Aorta (tissue), 5 donors: ENCODE measurements at regions of chr10 and their contacts with region 1.

Region 1: DNA sequence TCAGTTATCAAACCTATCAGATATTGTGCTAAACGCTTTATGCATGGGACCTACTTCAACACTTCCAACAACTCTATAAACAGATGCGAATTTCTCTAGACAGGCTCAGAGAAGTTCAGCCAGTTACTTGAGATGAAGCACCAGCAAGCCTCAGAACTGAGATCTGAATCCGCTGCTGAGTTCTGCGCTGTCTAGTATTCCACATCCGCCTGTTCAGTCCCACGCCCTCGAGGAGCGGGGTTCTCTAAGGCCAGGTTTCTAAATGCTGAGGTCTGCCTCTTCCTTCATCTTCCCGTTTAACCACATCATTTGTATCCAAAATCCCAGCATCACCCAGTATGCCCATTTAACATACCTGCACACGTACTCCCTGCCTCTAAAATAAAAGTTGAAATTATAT is 297.8 kb upstream of the ZNF32 start:
- DNase-seq: no peak
- ATAC-seq: no peak
- H3K4me3 ChIP-seq: no peak overlapping the region
- H3K27ac ChIP-seq: no peak overlapping the region
- H3K4me1 ChIP-seq: no peaks in the 10 kb centered on the region
- H3K27me3 ChIP-seq: no peaks in the 10 kb centered on the region

Region 2: GRCh38 chr10:43808136-43808535 is 138.3 kb before region 1 on chr10:
- intact Hi-C with region 1: no loop called
- DNase-seq: no peak
- ATAC-seq: no peak
- H3K4me3 ChIP-seq: no peak overlapping the region
- H3K27ac ChIP-seq: peak overlapping the region; percentile 45 to 90
- H3K4me1 ChIP-seq: peaks cover 5% of the 10 kb centered on the region in 2 donors
- H3K27me3 ChIP-seq: no peaks in the 10 kb centered on the region

Region 3: GRCh38 chr10:43928425-43928968 is 17.9 kb before region 1 on chr10:
- intact Hi-C with region 1: loop called in 1 of 2 experiments (anchors 2 kb)
- DNase-seq: no peak
- ATAC-seq: no peak
- H3K4me3 ChIP-seq: no peak overlapping the region
- H3K27ac ChIP-seq: no peak overlapping the region
- H3K4me1 ChIP-seq: no peaks in the 10 kb centered on the region
- H3K27me3 ChIP-seq: no peaks in the 10 kb centered on the region

Region 4: DNA sequence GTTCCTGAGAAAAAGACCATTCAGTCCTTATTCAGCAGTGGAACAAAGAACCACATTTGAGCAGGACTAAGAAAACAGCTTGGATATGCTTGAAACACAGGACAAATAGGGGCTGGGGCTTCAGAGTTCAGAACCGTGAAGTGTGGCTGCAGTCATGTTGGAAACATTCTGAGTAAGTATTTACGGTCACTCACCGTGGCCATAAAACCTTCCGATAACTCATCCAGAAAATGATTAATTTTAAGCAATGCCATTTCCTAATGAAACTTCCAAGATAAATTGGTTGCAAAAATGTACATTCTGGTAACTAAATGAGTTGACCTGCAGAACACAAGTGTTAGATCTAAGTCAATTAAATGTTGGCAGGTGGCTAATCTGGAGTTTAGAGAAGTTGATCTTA is 159.3 kb after region 1 on chr10:
- intact Hi-C with region 1: no loop called
- DNase-seq: no peak
- ATAC-seq: no peak
- H3K4me3 ChIP-seq: no peak overlapping the region
- H3K27ac ChIP-seq: no peak overlapping the region
- H3K4me1 ChIP-seq: peaks cover 0 to 2% of the 10 kb centered on the region in 2 donors
- H3K27me3 ChIP-seq: no peaks in the 10 kb centered on the region